PC-9 (cell line): ENCODE measurements at regions of chr13 and their contacts with region 1.

Region 1: DNA sequence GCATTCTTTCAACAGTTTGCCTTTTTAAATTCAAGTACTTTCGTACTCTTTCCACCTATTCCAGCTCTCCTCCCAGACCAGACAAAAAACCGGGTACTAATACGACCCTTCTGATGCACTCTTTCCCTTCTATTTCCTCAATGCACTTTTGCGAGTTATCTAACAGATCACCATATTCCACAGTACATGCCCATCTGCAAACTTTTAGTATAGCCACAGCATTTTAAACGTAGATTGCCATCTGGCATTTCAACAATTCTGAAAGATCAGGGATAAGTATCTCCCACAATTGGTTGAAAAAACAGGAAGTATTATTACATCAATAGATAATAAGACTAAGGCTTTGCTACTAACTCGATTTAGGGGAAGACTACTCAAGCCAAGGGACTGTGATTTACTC is 31.5 kb downstream of the RBM26 start:
- DNase-seq: no peak
- H3K4me3 ChIP-seq: no peak overlapping the region
- H3K27ac ChIP-seq: no peak overlapping the region
- H3K4me1 ChIP-seq: no peaks in the 10 kb centered on the region
- H3K27me3 ChIP-seq: no peaks in the 10 kb centered on the region
- CTCF ChIP-seq: no peak

Region 2: DNA sequence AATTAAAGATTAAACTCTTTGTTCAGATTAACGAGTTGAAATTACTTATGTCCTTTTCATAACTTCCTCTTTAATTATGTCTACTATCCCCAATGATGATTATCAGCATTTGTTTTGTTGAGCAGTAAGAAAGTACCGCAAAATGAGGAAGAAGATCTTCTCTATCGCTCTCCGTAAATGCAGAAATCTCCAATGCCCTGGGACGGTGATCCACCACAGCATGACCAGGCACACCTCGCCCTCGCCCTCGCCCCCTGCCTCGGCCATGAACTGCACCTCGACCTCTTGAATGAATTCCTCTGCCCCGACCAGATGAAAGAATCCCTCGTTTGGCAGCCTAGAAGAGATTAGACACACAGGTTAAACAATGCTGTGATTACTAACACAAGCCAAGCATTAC is 37.6 kb before region 1 on chr13:
- CTCF ChIA-PET with region 1: no interaction called
- POLR2A ChIA-PET with region 1: no interaction called
- intact Hi-C with region 1: loop called (anchors 5 kb)
- DNase-seq: no peak
- H3K4me3 ChIP-seq: no peak overlapping the region
- H3K27ac ChIP-seq: no peak overlapping the region
- H3K4me1 ChIP-seq: no peaks in the 10 kb centered on the region
- H3K27me3 ChIP-seq: no peaks in the 10 kb centered on the region
- CTCF ChIP-seq: no peak